HepG2 (cell line): ENCODE measurements at regions of chr3 and their contacts with region 1.

Region 1: GRCh38 chr3:186241910-186242821 is 119.9 kb downstream of the DGKG start:
- DNase-seq: peak; percentile 92
- ATAC-seq: peak; percentile 99
- H3K4me3 ChIP-seq: peak overlapping the region; percentile 66 to 78 (median 75)
- H3K27ac ChIP-seq: peak overlapping the region; percentile 64
- H3K4me1 ChIP-seq: peaks cover 19% of the 10 kb centered on the region
- H3K27me3 ChIP-seq: no peaks in the 10 kb centered on the region
- CTCF ChIP-seq: peak; percentile 94
- EP300 ChIP-seq: no peak
- POLR2A ChIP-seq: peak; percentile 48 to 76; a peak in 3 of 4 replicates
- RAD21 ChIP-seq: peak; percentile 87

Region 2: DNA sequence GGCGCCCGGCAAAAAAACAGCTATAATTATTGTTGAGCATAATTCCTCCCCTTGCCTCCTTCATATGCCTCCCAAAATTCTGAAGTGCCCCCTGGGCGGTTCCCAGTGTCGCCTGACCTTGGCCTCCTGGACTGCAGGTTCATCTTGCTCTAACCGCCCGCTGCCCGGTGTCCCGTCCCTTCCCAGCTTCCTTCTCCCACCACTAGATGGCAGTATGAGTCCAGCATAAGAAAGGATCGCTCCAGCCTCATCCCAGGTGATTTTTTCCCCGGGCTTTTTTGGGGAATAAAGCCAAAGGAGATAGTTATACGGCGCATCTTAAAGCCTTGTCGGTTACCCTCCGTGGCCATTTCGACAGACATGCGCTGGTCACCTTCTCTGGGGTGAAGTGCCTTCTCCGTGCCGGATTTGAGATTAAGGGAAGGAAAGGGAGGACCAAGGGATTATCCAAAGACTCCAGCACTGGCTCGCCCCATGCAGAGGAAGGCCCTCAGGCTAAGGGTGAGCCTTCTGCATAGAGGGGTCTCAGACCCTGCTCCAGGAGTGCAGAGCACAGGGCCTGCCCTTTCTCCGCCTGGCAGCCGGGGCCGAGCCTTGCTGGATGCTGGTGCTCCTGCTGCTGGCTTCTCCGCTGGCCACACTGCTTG is 258.5 kb before region 1 on chr3:
- CTCF ChIA-PET with region 1: interaction called, 33 read pairs
- POLR2A ChIA-PET with region 1: interaction called, 4 read pairs
- in situ Hi-C with region 1: loop called (anchors 5 kb)
- intact Hi-C with region 1: loop called (anchors 1 kb)
- DNase-seq: peak; percentile 65
- ATAC-seq: peak; percentile 91
- H3K4me3 ChIP-seq: no peak overlapping the region
- H3K27ac ChIP-seq: no peak overlapping the region
- H3K4me1 ChIP-seq: peaks cover 41% of the 10 kb centered on the region
- H3K27me3 ChIP-seq: no peaks in the 10 kb centered on the region
- CTCF ChIP-seq: peak; percentile 90
- EP300 ChIP-seq: no peak
- POLR2A ChIP-seq: no peak
- RAD21 ChIP-seq: peak; percentile 89

Region 3: DNA sequence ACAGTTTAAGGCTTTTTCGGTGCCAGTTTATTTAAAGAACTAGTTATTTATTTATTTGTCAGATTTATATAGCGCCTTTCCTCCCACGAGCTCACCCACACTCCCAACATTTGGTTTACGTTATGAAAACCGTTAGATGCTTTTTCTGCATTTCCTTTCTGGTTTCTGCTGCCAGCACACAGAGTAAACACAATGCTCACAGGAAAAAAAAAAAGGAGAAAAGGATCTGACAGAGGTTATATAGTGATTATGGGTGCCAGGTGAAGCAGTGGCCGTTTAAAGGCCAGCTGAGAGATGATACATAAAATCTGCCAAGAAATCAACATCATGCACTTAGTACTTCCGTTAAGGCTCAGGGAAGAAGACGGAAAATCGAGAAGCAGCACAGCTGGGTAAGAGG is 171.2 kb before region 1 on chr3:
- CTCF ChIA-PET with region 1: interaction called, 8 read pairs
- POLR2A ChIA-PET with region 1: interaction called, 4 read pairs
- in situ Hi-C with region 1: no loop called
- intact Hi-C with region 1: loop called (anchors 5 kb)
- DNase-seq: no peak
- ATAC-seq: peak; percentile 37; the same call in 2 of the 3 replicates
- H3K4me3 ChIP-seq: no peak overlapping the region
- H3K27ac ChIP-seq: peak overlapping the region; percentile 45
- H3K4me1 ChIP-seq: peaks cover 27% of the 10 kb centered on the region
- H3K27me3 ChIP-seq: no peaks in the 10 kb centered on the region
- CTCF ChIP-seq: no peak
- EP300 ChIP-seq: no peak
- POLR2A ChIP-seq: no peak
- RAD21 ChIP-seq: no peak

Region 4: DNA sequence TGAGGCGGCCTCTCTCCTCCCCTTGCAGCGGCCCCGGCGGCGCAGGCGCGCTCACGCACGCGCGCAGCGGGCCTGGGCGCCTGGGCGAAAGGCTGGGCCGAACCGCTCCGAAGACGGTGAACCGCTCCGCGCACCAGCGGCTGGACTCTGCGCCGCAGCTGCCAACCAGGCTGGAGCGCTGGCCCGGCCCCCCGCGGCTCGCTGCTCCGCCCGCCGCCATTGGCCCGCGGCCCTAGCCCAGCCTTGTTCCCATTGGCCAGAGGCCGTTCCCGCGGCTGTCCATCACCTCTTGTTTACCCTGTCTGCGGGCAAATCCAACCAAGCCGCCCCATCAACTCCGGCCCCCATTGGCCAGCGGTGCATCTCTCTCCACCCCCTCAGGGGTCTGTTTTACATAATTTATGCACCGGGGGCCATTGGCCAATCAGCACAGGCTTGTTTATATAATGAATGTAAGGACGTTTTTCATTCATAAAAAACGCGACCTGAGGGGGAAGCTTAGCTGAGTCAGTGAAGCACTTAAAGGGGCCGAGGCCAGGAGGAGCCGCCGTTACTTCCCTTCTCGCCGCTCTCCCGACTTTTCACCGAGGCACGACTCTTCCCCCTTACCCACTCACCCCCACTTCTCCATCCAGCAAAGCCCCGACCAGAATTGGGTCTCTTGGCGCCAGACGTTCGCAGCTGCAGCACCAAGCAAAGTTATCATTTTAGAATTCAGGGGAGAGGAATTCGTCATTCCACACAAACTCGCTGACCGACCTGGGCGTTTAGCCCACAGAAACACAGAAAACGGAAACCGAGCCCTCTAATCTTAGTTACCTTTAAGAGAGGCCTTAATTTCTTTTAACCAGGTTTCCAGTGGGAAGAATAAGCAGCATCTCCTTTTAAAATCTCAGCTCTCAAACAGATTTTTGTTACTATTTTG is 133.0 kb before region 1 on chr3 and contains the start of gene ETV5:
- CTCF ChIA-PET with region 1: interaction called, 4 read pairs
- POLR2A ChIA-PET with region 1: interaction called, 9 read pairs
- in situ Hi-C with region 1: loop called (anchors 10 kb)
- intact Hi-C with region 1: loop called (anchors 1 kb)
- DNase-seq: peak; percentile 99
- ATAC-seq: peak; percentile 93
- H3K4me3 ChIP-seq: peak within 1 kb of the TSS; percentile 84 to 97 (median 95)
- H3K27ac ChIP-seq: peak within 1 kb of the TSS; percentile 95
- H3K4me1 ChIP-seq: peaks cover 56% of the 10 kb centered on the region
- H3K27me3 ChIP-seq: no peaks in the 10 kb centered on the region; a peak in 1 of 5 replicates
- CTCF ChIP-seq: no peak
- EP300 ChIP-seq: peak in 1 of 2 experiments; percentile 5; a peak in 1 of 4 replicates
- POLR2A ChIP-seq: peak; percentile 89 to 94
- RAD21 ChIP-seq: no peak
- total RNA-seq, gene ETV5: 52.9 and 60.0 TPM in 2 replicates

Region 5: DNA sequence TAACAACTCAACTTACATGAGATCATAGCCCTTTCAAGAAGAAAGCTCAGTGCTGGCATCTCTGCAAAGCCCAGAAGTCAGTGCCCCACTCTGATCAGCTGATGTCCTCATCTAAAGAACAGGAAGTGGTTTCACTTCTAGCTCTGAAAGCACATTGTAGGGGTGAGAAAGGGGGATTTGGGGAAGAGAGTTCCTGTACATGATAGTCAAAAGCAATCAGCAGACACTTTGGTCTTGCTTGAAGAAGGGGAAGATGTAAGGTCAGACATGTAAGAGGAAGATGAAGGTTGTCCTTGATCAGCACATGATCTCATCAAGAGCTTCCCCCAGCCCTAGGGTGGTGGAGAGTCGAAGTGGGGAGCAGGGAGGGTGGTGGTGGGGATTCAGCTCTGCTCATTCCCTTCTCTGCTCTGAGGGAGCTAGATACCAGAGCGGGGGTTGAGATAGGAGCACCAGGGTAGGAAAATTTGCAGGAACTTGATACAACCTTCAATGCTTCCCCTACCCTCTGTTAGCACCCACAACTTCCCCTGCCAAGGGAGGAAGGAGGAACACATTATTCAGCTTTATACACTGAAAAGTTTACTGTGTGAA is 56.9 kb before region 1 on chr3:
- CTCF ChIA-PET with region 1: no interaction called
- POLR2A ChIA-PET with region 1: no interaction called
- in situ Hi-C with region 1: no loop called
- intact Hi-C with region 1: no loop called
- DNase-seq: no peak
- ATAC-seq: no peak
- H3K4me3 ChIP-seq: no peak overlapping the region
- H3K27ac ChIP-seq: no peak overlapping the region
- H3K4me1 ChIP-seq: peaks cover 12% of the 10 kb centered on the region
- H3K27me3 ChIP-seq: no peaks in the 10 kb centered on the region
- CTCF ChIP-seq: no peak
- EP300 ChIP-seq: no peak
- POLR2A ChIP-seq: no peak
- RAD21 ChIP-seq: no peak

Region 6: DNA sequence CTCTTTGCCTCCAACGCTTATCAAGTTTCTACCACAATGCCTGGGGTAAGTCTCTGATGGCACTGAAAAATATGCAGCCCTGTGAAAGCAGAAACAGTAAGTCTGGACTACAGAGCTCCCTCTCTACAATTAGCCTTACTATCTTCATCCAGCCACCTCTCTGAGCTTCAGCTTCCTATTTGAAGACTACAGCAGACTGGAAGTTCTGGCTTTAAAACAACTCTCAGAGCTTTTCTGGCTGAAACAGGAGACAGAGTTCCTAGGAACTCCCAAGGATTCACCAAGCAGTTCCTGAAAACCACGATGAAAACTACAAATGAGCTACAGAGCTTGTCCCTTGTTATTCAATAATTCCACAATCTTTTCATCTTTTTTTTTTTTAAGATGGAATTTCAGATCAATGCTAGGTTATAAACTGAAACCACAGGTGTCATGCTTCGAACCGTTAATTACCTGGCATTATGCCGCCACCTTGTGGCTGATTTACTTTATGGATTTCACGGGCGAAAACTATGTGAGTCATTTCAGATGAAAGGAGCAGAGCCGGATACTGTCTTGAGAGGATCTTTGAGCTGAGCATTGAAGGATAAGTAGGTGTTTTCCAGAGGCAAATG is 298.2 kb after region 1 on chr3:
- CTCF ChIA-PET with region 1: interaction called, 12 read pairs
- POLR2A ChIA-PET with region 1: no interaction called
- in situ Hi-C with region 1: no loop called
- intact Hi-C with region 1: no loop called
- DNase-seq: peak; percentile 70
- ATAC-seq: peak; percentile 92
- H3K4me3 ChIP-seq: no peak overlapping the region
- H3K27ac ChIP-seq: no peak overlapping the region
- H3K4me1 ChIP-seq: peaks cover 18% of the 10 kb centered on the region
- H3K27me3 ChIP-seq: no peaks in the 10 kb centered on the region
- CTCF ChIP-seq: peak; percentile 86
- EP300 ChIP-seq: no peak
- POLR2A ChIP-seq: no peak
- RAD21 ChIP-seq: 0 out of 2 replicates have a peak, but pooled peaks have one; percentile 40